ENCODE measurements at regions of chr6 and their contacts with region 1.

Region 1: DNA sequence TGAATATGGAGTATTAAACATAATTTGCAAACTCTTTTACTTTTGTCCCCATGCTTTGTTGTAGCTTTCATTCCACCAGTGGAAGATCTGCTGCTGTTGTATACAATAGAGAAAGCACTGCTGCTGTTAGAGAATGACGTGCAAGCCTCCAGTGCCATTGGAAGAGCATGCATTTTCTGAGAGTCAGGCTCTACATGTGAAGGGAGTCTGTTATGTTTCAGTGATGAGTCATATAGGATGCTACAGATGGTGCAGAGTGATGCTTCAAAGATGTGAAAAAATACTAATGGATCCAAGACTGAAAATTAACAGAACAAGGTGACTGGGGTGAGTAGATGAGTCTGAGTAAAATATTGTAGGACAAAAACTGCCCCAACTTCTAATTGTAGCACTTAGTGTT is 22.4 kb upstream of the BACH2 start:
- DNase-seq: peak; percentile 40
- ATAC-seq: peak; percentile 82
- H3K4me3 Mint-ChIP-seq: no peak overlapping the region
- H3K27ac Mint-ChIP-seq: peak overlapping the region; percentile 80
- H3K4me1 Mint-ChIP-seq: peaks cover 43% of the 10 kb centered on the region
- H3K27me3 Mint-ChIP-seq: peaks cover 6% of the 10 kb centered on the region

Region 2: GRCh38 chr6:90197854-90198496 is 121.1 kb before region 1 on chr6:
- CTCF ChIA-PET with region 1: no interaction called
- POLR2A ChIA-PET with region 1: no interaction called
- intact Hi-C with region 1: no loop called
- DNase-seq: peak; percentile 40
- ATAC-seq: no peak
- H3K4me3 Mint-ChIP-seq: peak overlapping the region; percentile 34
- H3K27ac Mint-ChIP-seq: peak overlapping the region; percentile 75
- H3K4me1 Mint-ChIP-seq: peaks cover 87% of the 10 kb centered on the region
- H3K27me3 Mint-ChIP-seq: no peaks in the 10 kb centered on the region

Region 3: DNA sequence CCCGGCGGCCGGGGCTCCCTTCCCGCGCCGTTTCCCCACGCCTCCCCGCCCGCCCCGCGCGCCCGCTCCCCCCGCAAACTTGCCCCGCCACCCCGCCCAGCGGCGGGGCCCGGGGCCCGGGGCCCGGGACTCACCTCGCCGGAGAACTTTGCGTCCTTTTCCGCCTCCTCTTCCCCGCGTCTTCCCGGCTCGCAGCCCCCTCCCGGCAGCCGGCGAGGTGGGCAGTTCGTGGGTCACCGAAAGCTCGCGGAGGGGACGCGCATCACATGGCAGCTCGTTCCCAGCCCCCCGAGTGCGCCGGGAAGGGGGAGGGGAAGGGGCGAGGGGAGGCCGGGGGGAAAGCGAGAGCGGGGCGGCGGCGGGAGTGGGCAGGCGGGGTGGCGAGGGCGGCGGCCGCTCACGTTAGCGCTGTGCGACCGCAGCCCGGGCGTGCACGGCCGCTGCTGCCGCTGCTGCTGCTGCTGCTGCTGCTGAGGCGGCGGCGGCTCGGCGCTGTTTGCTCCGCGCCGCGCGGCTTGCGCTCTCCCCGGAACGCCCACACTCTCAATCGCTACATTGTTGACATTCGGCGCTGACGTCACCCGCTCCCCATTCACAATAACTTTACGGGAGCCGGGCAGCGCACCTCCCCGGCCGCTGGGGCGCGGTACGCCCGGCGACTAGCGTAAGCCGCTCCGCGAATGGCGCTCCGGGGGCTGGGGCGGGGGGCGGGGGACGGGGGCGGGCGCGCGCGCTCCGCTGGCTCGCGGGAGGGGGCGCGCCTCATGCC is 22.5 kb before region 1 on chr6 and contains the start of gene BACH2:
- CTCF ChIA-PET with region 1: interaction called, 6 read pairs
- POLR2A ChIA-PET with region 1: interaction called, 4 read pairs
- intact Hi-C with region 1: loop called in 1 of 2 experiments (anchors 1 kb)
- DNase-seq: peak; percentile 99
- ATAC-seq: peak; percentile 66
- H3K4me3 Mint-ChIP-seq: peak within 1 kb of the TSS; percentile 86
- H3K27ac Mint-ChIP-seq: peak within 1 kb of the TSS; percentile 100
- H3K4me1 Mint-ChIP-seq: peaks cover 49% of the 10 kb centered on the region
- H3K27me3 Mint-ChIP-seq: peaks cover 7% of the 10 kb centered on the region
- total RNA-seq, gene BACH2: 74.7 to 87.3 TPM

Region 4: DNA sequence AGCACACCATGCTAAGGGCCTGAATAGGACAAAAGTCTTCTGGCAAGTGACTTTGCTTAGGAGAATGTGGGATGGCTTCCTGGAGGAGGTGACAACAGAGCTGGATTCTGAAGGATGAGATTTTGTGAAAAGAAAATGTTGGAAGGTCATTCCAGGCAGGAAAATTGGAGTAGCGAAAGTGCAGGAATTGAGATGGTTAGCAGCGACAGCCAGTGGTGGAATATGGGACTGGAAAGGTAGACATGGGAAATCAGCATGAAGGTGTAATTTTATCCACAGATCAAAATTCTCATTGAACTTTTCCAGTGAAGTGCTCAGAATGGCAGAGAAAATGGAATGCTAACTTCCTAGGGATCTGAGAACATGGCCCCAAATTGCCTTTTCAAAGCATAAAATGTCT is 16.7 kb before region 1 on chr6:
- CTCF ChIA-PET with region 1: interaction called, 6 read pairs
- POLR2A ChIA-PET with region 1: no interaction called
- intact Hi-C with region 1: loop called in 1 of 2 experiments (anchors 1 kb)
- DNase-seq: no peak
- ATAC-seq: no peak
- H3K4me3 Mint-ChIP-seq: no peak overlapping the region
- H3K27ac Mint-ChIP-seq: no peak overlapping the region
- H3K4me1 Mint-ChIP-seq: peaks cover 55% of the 10 kb centered on the region
- H3K27me3 Mint-ChIP-seq: peaks cover 20% of the 10 kb centered on the region